Activated naive CD8-positive, alpha-beta T cell treated with anti-CD3 and anti-CD28 coated beads, Interleukin-2, amount 10 ng/mL, durations not matched to agents 7 days and 5 days (primary cell): ENCODE measurements at regions of chr3 and their contacts with region 1.

Region 1: DNA sequence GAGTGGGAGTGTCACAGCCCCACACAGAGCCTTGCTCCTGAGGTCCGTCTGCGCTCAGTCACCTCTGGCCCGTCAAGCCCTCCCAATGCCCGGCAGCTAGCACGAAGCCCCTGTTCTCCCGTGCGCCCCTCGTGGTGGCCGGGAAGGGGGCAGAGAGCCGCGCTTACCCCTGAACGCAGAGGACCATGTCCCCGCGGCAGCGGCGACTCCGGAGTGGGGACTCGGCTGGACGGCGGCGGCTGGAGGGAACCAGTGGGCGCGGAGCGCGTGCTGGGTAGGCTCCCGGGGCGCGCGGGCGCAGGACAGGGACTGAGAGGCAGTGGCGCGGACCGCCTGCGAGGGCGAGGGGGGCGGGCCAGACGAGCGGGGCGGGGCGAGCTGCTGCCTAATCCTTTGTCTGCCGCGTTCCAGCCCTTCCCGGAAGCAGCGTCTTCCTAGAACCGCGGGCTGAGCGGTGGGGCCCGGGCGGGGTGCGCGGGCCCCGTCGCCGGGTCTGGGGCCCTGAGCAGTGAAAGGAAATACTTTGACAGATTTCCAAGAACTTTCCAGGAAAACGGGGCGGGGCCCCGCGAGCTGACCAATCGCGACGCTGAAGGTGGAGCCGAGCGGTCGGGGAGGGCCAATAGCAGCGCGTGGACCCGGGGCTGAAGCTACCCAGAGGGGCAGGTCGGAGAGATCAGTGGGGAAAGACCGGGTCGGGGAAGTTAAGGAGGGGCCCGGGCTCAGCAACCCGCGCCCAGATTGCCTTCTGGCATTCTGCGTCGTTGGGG is at the start of gene CISH:
- DNase-seq: peak; percentile 98
- ATAC-seq: peak; percentile 63
- H3K4me3 Mint-ChIP-seq: peak within 1 kb of the TSS; percentile 97
- H3K27ac Mint-ChIP-seq: peak within 1 kb of the TSS; percentile 100
- H3K4me1 Mint-ChIP-seq: peaks cover 36% of the 10 kb centered on the region
- H3K27me3 Mint-ChIP-seq: no peaks in the 10 kb centered on the region
- total RNA-seq, gene CISH: 365 to 400 TPM

Region 2: GRCh38 chr3:50350527-50351322 is 260.9 kb before region 1 on chr3 and contains the starts of genes CYB561D2 and NPRL2:
- POLR2A ChIA-PET with region 1: interaction called, 16 read pairs
- DNase-seq: peak; percentile 99
- ATAC-seq: peak; percentile 90
- H3K4me3 Mint-ChIP-seq: peak within 1 kb of the TSS; percentile 90
- H3K27ac Mint-ChIP-seq: peak within 1 kb of the TSS; percentile 93
- H3K4me1 Mint-ChIP-seq: peaks cover 46% of the 10 kb centered on the region
- H3K27me3 Mint-ChIP-seq: no peaks in the 10 kb centered on the region
- total RNA-seq, gene CYB561D2: 35.0 to 38.9 TPM
- total RNA-seq, gene NPRL2: 55.8 to 58.2 TPM

Region 3: DNA sequence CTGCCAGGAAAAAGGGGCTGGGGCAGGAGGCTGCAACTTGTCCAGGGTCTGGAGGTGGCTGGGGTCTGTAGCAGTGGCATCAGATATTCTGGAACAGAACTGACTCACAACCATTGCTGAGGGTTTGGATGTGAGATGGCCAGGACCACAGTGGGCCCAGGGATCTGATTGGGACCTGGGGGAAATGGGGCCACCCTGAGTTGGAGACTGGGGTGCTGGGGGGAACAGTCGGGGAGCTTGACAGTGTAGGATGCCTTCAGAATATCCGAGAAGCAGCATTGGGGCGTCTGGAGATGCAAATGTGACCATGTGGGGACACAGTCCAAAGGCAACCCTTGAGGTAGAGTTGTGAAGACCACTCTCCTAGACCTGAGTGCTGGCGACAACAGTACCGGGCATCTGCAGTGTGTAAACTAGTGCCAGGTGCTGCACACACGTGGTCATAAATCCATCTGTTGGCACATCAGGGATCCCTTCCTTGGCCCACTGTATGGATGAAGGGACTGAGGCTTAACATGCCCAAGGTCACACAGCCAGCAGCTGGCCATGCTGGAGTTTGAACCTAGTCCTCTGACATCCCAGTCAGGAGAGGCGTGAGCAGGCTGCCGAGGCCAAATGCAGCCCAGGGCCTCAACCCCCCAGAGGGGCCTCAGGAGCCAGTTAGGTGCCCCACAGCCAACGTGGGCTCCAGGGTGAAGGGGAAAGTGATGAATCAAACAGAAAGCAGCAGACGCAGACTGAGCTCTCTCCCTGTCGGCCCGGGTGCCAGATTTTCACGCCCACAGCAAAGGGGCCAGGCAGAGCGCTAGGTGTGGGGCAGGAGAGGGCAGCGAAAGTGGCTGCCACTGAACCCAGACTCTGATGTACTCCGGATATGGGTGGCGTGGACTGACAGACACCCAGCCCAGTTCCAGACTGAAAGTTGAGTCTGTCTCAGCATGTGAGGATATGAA is 23.6 kb before region 1 on chr3:
- POLR2A ChIA-PET with region 1: interaction called, 3,572 read pairs
- DNase-seq: peak; percentile 69
- ATAC-seq: peak; percentile 30
- H3K4me3 Mint-ChIP-seq: peak overlapping the region; percentile 51
- H3K27ac Mint-ChIP-seq: peak overlapping the region; percentile 94
- H3K4me1 Mint-ChIP-seq: peaks cover 81% of the 10 kb centered on the region
- H3K27me3 Mint-ChIP-seq: no peaks in the 10 kb centered on the region

Region 4: DNA sequence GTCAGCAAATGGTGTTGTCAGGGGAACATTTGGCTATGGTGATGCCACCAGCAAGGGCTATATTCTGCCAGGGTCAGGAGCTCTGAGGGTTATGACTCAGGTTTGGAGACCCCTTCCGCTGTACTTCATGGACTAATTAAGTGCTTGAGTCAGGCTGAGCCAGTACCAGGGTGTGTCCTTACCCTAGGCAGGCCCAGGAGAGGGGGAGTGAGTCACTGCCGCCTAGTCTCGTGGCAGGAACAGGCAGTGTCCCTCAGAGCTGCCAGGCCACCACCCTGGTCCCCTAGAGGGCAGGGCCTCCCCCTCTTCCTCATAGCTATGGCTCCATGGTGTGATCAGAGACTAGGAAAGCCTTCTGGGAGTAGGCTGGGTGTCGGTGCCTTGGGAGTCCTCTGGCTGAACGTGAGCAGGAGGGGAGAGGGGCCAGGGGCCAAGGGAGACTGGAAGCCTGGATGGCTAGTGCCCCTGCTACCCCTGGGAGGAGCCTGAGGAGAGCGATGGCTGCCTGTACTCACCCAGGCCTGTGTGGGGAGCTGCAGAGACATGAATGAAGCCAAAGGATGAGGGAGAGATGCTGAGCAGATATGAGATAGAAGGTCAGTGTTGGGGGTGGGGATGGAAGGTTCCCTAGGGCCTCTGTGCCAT is 15.9 kb after region 1 on chr3:
- POLR2A ChIA-PET with region 1: interaction called, 896 read pairs
- DNase-seq: no peak
- ATAC-seq: peak; percentile 24
- H3K4me3 Mint-ChIP-seq: no peak overlapping the region
- H3K27ac Mint-ChIP-seq: peak overlapping the region; percentile 1
- H3K4me1 Mint-ChIP-seq: peaks cover 81% of the 10 kb centered on the region
- H3K27me3 Mint-ChIP-seq: no peaks in the 10 kb centered on the region

Region 5: GRCh38 chr3:50652709-50653108 is 41.1 kb after region 1 on chr3:
- POLR2A ChIA-PET with region 1: interaction called, 20 read pairs
- DNase-seq: peak; percentile 65
- ATAC-seq: peak; percentile 46
- H3K4me3 Mint-ChIP-seq: no peak overlapping the region
- H3K27ac Mint-ChIP-seq: peak overlapping the region; percentile 22
- H3K4me1 Mint-ChIP-seq: peaks cover 23% of the 10 kb centered on the region
- H3K27me3 Mint-ChIP-seq: no peaks in the 10 kb centered on the region

Region 6: GRCh38 chr3:51156147-51156546 is 544.5 kb after region 1 on chr3:
- POLR2A ChIA-PET with region 1: no interaction called
- DNase-seq: no peak
- ATAC-seq: no peak
- H3K4me3 Mint-ChIP-seq: no peak overlapping the region
- H3K27ac Mint-ChIP-seq: no peak overlapping the region
- H3K4me1 Mint-ChIP-seq: no peaks in the 10 kb centered on the region
- H3K27me3 Mint-ChIP-seq: no peaks in the 10 kb centered on the region

Region 7: GRCh38 chr3:51384726-51385473 is 773.3 kb after region 1 on chr3 and contains the start of gene MANF:
- POLR2A ChIA-PET with region 1: interaction called, 19 read pairs
- DNase-seq: peak; percentile 95
- ATAC-seq: peak; percentile 97
- H3K4me3 Mint-ChIP-seq: peak within 1 kb of the TSS; percentile 91
- H3K27ac Mint-ChIP-seq: peak within 1 kb of the TSS; percentile 95
- H3K4me1 Mint-ChIP-seq: peaks cover 37% of the 10 kb centered on the region
- H3K27me3 Mint-ChIP-seq: no peaks in the 10 kb centered on the region
- total RNA-seq, gene MANF: 86.2 to 88.2 TPM